AG04450 (cell line): ENCODE measurements at regions of chr17 and their contacts with region 1.

Region 1: GRCh38 chr17:29369831-29370735 is 20.1 kb upstream of the TAOK1 start:
- DNase-seq: peak; percentile 55
- H3K4me3 ChIP-seq: peak overlapping the region; percentile 44
- H3K27ac ChIP-seq: peak overlapping the region; percentile 34
- H3K27me3 ChIP-seq: no peaks in the 10 kb centered on the region
- CTCF ChIP-seq: peak; percentile 65

Region 2: DNA sequence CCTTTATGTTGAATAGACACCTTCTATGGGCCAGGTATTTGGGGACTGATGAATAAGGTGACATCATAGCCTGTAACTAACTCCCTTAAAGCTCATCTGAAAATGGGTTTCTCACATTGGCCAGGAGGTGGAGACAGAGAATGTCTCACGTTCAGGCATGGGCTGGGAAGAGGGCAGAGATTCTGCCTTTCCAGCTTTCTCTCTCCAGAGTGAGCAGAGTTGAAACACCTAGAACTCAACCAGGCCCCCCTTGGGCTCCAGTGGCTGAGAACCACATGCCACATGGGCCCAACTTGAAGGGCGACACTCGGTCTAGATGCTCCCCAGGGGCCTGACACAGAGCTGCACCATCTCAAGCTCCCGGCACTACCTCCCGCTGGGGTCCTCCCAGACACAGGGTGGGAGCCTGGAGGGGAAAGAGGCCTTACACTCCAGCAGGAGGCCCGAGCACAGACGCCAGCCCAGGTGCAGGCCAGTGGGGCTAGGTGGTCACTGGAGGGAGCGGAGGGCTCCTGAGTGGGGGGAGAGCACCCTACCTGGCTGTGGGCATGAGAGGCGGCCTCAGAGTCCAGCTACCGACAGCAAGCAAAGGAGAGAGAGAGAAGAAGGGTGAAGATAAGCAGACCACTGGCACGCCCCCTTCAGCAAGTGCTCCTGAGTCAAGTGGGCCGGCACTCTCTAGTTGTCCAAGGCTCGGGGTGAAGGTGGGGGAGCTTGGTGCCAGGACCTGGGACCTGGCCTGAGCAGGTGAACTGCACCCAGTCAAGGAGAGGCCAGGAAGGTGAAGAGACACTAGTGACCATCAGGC is 245.8 kb before region 1 on chr17:
- CTCF ChIA-PET with region 1: interaction called, 11 read pairs
- POLR2A ChIA-PET with region 1: no interaction called
- DNase-seq: no peak
- H3K4me3 ChIP-seq: no peak overlapping the region
- H3K27ac ChIP-seq: peak overlapping the region; percentile 31
- H3K27me3 ChIP-seq: no peaks in the 10 kb centered on the region
- CTCF ChIP-seq: peak; percentile 83

Region 3: GRCh38 chr17:29383686-29384085 is 13.6 kb after region 1 on chr17:
- CTCF ChIA-PET with region 1: interaction called, 28 read pairs
- POLR2A ChIA-PET with region 1: interaction called, 9 read pairs
- DNase-seq: no peak
- H3K4me3 ChIP-seq: no peak overlapping the region
- H3K27ac ChIP-seq: no peak overlapping the region
- H3K27me3 ChIP-seq: no peaks in the 10 kb centered on the region
- CTCF ChIP-seq: no peak

Region 4: GRCh38 chr17:29475891-29476290 is 105.8 kb after region 1 on chr17:
- CTCF ChIA-PET with region 1: interaction called, 23 read pairs
- POLR2A ChIA-PET with region 1: no interaction called
- DNase-seq: no peak
- H3K4me3 ChIP-seq: no peak overlapping the region
- H3K27ac ChIP-seq: no peak overlapping the region
- H3K27me3 ChIP-seq: no peaks in the 10 kb centered on the region
- CTCF ChIP-seq: no peak

Region 5: DNA sequence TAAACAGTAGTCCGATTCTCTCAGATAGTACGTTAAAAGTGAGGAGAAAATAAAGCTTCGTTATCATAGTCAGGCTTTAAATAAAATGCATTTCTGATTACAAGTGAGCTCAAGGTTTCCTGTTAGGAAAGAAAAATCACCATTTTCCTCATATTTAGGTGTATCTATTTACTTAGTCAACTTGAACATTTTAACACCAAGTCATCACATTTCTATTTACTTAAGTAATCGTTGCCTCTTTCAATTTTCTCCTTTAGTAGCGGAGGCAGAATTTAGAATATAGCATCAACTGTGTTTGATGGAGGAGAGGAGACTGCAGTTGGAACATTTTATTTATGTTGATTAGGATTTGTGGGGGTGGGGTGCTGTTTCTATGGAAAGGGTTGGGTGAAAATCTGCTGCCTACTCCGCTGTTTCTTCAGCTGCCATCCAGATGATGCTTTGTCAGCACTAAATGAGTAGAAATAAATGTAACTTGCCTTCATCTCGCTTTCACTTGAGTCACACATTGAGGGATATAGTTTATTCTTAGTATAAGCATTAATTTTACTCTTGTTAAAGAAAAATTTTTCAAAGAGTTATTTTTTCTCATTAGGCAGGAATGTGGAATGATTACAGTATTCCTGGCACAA is 154.5 kb after region 1 on chr17:
- CTCF ChIA-PET with region 1: interaction called, 15 read pairs
- POLR2A ChIA-PET with region 1: no interaction called
- DNase-seq: no peak
- H3K4me3 ChIP-seq: no peak overlapping the region
- H3K27ac ChIP-seq: no peak overlapping the region
- H3K27me3 ChIP-seq: no peaks in the 10 kb centered on the region
- CTCF ChIP-seq: no peak

Region 6: DNA sequence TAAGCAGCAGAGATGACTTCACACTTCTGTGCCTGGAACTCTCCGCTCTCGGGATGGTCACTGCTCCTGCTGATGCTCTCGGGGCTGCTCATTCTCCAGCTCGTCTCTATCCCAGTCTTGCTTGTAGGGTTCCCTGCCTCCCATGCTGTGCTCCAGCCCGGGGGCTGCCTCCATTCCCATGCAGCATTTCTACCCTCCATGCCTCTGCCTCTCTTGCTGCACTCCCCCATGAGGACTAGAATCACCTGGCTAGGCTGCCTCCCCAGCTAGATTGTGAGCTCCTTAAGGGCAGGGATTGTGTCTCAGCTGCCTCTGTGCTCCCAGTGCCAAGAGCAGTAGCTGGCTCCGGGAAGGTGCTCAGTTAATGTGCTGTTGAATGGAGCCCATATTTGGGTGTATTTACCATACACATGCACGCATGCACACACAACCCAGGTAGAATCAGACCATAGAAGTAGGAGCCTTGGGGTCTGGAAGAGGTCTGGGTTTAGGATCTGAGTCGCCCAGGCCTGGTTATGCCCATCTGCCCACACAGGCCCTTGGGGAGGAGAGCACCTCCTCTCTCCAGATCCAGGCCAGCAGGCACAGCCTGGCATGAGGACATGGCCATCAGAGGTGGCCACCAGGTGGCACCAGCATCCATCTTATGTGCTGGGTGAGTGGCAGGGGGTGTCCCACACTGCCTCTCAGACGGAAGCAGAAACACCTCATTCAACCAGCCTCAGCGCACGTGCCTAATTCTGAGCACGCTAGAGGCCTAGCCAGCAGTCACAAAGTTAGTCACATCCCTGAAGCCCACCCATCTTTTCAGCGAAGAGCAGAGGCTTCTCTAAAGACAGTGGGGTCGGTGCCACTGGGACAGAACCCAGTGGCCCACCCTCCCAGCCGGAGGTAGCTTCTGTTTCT is 210.0 kb after region 1 on chr17:
- CTCF ChIA-PET with region 1: interaction called, 77 read pairs
- POLR2A ChIA-PET with region 1: no interaction called
- DNase-seq: no peak
- H3K4me3 ChIP-seq: no peak overlapping the region
- H3K27ac ChIP-seq: no peak overlapping the region
- H3K27me3 ChIP-seq: no peaks in the 10 kb centered on the region
- CTCF ChIP-seq: peak; percentile 79